ENCODE measurements at regions of chr20 and their contacts with region 1.

Region 1: GRCh38 chr20:57654363-57654997 is 34.3 kb upstream of the ZBP1 start:
- DNase-seq: peak in 1 of 2 donors; percentile 68
- H3K4me3 ChIP-seq: no peak overlapping the region
- H3K27ac ChIP-seq: peak overlapping the region; percentile 13 to 40
- H3K4me1 ChIP-seq: peaks cover 0 to 19% of the 10 kb centered on the region in 2 donors
- H3K27me3 ChIP-seq: no peaks in the 10 kb centered on the region
- CTCF ChIP-seq: peak; percentile 81 to 92 (median 89)

Region 2: DNA sequence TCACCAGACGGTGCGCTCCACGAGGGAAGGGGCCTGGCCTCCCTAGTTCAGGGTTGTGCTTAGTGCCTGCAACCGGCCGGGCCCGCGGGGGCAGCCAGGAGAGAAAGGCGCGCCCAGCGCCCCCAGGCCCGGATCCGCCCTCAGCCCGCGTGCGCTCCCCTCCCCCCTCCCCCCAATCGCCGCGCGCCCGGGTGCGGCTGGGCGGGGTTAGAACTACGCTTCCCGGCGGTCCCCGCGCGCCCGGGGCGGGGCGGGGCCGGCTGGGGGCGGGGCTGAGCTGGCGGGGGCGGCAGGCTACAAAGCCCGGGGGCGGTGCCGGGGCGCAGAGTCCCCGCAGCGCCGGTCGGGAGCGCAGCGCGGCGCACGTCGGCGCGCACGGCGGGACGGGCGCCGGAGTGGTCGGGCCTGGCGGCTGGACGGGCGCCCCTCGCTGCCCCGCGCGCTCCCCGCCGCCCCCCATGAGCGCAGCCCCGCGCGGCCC is 263.4 kb before region 1 on chr20 and contains the start of gene RBM38:
- intact Hi-C with region 1: loop called (anchors 10 kb)
- DNase-seq: no peak
- H3K4me3 ChIP-seq: peak within 1 kb of the TSS; percentile 79 to 83
- H3K27ac ChIP-seq: peak within 1 kb of the TSS; percentile 82 to 91
- H3K4me1 ChIP-seq: peaks cover 4 to 45% of the 10 kb centered on the region in 2 donors
- H3K27me3 ChIP-seq: no peaks in the 10 kb centered on the region
- CTCF ChIP-seq: no peak
- total RNA-seq, gene RBM38: 24.6 TPM

Region 3: GRCh38 chr20:57709931-57710799 is 55.7 kb after region 1 on chr20 and contains the start of gene PMEPA1:
- intact Hi-C with region 1: loop called (anchors 2 kb)
- DNase-seq: peak; percentile 81 to 97
- H3K4me3 ChIP-seq: peak within 1 kb of the TSS; percentile 73 to 79
- H3K27ac ChIP-seq: peak within 1 kb of the TSS; percentile 94 to 97
- H3K4me1 ChIP-seq: peaks cover 23 to 50% of the 10 kb centered on the region in 2 donors
- H3K27me3 ChIP-seq: no peaks in the 10 kb centered on the region
- CTCF ChIP-seq: no peak
- total RNA-seq, gene PMEPA1: 56.8 TPM

Region 4: DNA sequence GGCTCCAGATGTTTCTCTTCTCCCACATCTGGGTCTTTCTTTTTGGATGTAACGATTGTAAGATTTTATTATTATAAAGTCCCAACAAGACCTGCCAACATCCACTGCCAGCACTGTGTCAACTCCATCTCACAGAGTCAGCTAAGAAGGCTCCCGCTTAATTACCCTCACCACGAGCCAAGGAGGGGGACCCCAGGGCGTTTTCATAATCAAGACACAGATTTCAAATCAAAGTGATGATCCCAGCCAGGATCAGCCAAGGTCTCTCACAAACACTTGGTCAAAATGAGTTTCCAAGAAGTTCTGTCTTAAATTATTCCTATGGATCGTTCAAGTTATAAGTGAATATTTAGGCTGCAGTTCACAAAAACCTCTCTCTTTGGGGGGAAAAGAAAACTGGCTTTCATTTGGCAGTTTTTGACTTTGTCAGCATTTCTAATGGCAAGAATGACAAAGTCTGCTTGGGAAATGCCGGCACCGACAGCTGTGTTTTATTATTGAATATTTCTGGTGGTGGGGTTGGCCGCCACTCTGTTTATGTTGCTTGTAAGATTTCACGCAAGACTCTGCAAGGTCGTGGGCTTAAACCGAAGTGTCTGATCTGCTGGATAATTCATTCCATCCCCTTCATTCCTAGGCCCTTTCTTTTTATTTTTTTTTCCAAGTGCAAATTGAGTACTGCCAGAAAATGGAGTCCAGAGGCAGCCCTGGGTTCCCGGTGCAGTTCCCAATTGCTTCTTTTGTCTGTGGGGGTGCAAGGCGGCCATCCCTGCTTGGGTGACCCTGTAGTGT is 225.5 kb after region 1 on chr20:
- intact Hi-C with region 1: loop called (anchors 10 kb)
- DNase-seq: peak in 1 of 2 donors; percentile 56
- H3K4me3 ChIP-seq: peak overlapping the region in 1 of 2 donors; percentile 5
- H3K27ac ChIP-seq: peak overlapping the region; percentile 22 to 34
- H3K4me1 ChIP-seq: peaks cover 0 to 7% of the 10 kb centered on the region in 2 donors
- H3K27me3 ChIP-seq: no peaks in the 10 kb centered on the region
- CTCF ChIP-seq: no peak

Region 5: GRCh38 chr20:58141971-58142781 is 487.7 kb after region 1 on chr20:
- intact Hi-C with region 1: no loop called
- DNase-seq: no peak
- H3K4me3 ChIP-seq: no peak overlapping the region
- H3K27ac ChIP-seq: peak overlapping the region in 1 of 2 donors; percentile 32
- H3K4me1 ChIP-seq: peaks cover 6 to 23% of the 10 kb centered on the region in 2 donors
- H3K27me3 ChIP-seq: no peaks in the 10 kb centered on the region
- CTCF ChIP-seq: no peak

Region 6: GRCh38 chr20:58209652-58210397 is 555.3 kb after region 1 on chr20:
- intact Hi-C with region 1: loop called (anchors 1 kb)
- DNase-seq: peak in 1 of 2 donors; percentile 88
- H3K4me3 ChIP-seq: no peak overlapping the region
- H3K27ac ChIP-seq: no peak overlapping the region
- H3K4me1 ChIP-seq: no peaks in the 10 kb centered on the region
- H3K27me3 ChIP-seq: no peaks in the 10 kb centered on the region
- CTCF ChIP-seq: peak; percentile 100

Region 7: GRCh38 chr20:59299944-59300331 is 1645.5 kb after region 1 on chr20:
- intact Hi-C with region 1: no loop called
- DNase-seq: no peak
- H3K4me3 ChIP-seq: no peak overlapping the region
- H3K27ac ChIP-seq: no peak overlapping the region
- H3K4me1 ChIP-seq: no peaks in the 10 kb centered on the region
- H3K27me3 ChIP-seq: no peaks in the 10 kb centered on the region
- CTCF ChIP-seq: no peak

Measured in ascending aorta (tissue), 2 donors.